Right cardiac atrium (tissue), 5 donors: ENCODE measurements at regions of chr1 and their contacts with region 1.

Region 1: GRCh38 chr1:207321079-207321789 is at the start of gene CD55:
- DNase-seq: peak; percentile 96 to 98 (median 97)
- ATAC-seq: peak; percentile 98
- H3K4me3 ChIP-seq: peak within 1 kb of the TSS; percentile 83
- H3K27ac ChIP-seq: peak within 1 kb of the TSS; percentile 91
- H3K4me1 ChIP-seq: no peaks in the 10 kb centered on the region
- H3K27me3 ChIP-seq: no peaks in the 10 kb centered on the region
- total RNA-seq, gene CD55: 57.9 to 93.4 (median 67.9) TPM

Region 2: GRCh38 chr1:207077470-207078377 is 243.5 kb before region 1 on chr1:
- intact Hi-C with region 1: loop called in 1 of 4 experiments (anchors 5 kb)
- DNase-seq: no peak
- ATAC-seq: peak; percentile 77 to 87
- H3K4me3 ChIP-seq: no peak overlapping the region
- H3K27ac ChIP-seq: no peak overlapping the region
- H3K4me1 ChIP-seq: no peaks in the 10 kb centered on the region
- H3K27me3 ChIP-seq: no peaks in the 10 kb centered on the region

Region 3: GRCh38 chr1:207259391-207259790 is 61.8 kb before region 1 on chr1:
- intact Hi-C with region 1: no loop called
- DNase-seq: no peak
- ATAC-seq: peak; percentile 45 to 83
- H3K4me3 ChIP-seq: no peak overlapping the region
- H3K27ac ChIP-seq: no peak overlapping the region
- H3K4me1 ChIP-seq: no peaks in the 10 kb centered on the region
- H3K27me3 ChIP-seq: no peaks in the 10 kb centered on the region

Region 4: DNA sequence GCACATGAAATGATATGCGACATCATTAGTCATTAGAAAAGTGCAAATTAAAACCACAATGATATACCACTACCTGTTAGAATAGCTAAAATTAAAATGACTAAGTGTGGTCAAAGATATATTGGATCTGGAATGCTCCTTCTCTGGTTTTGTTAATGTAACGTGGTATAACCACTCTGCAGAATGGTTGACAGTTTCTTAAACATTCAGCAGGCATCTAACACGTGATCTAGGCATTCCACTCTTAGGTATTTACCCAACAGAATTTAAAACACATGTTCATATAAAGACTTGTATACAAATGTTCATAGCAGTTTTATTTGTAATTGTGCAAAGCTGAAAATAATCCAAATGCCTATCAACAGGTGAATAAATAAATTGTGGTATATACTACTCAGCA is 1087.9 kb after region 1 on chr1:
- intact Hi-C with region 1: no loop called
- DNase-seq: no peak
- ATAC-seq: no peak
- H3K4me3 ChIP-seq: no peak overlapping the region
- H3K27ac ChIP-seq: no peak overlapping the region
- H3K4me1 ChIP-seq: no peaks in the 10 kb centered on the region
- H3K27me3 ChIP-seq: no peaks in the 10 kb centered on the region